ENCODE measurements at regions of chr9 and their contacts with region 1.

Region 1: GRCh38 chr9:34484682-34485081 is 26.1 kb downstream of the DNAI1 start:
- DNase-seq: peak; percentile 54 to 73
- H3K4me3 ChIP-seq: no peak overlapping the region
- H3K27ac ChIP-seq: no peak overlapping the region
- H3K4me1 ChIP-seq: peaks cover 12% of the 10 kb centered on the region
- H3K27me3 ChIP-seq: no peaks in the 10 kb centered on the region
- CTCF ChIP-seq: no peak

Region 2: DNA sequence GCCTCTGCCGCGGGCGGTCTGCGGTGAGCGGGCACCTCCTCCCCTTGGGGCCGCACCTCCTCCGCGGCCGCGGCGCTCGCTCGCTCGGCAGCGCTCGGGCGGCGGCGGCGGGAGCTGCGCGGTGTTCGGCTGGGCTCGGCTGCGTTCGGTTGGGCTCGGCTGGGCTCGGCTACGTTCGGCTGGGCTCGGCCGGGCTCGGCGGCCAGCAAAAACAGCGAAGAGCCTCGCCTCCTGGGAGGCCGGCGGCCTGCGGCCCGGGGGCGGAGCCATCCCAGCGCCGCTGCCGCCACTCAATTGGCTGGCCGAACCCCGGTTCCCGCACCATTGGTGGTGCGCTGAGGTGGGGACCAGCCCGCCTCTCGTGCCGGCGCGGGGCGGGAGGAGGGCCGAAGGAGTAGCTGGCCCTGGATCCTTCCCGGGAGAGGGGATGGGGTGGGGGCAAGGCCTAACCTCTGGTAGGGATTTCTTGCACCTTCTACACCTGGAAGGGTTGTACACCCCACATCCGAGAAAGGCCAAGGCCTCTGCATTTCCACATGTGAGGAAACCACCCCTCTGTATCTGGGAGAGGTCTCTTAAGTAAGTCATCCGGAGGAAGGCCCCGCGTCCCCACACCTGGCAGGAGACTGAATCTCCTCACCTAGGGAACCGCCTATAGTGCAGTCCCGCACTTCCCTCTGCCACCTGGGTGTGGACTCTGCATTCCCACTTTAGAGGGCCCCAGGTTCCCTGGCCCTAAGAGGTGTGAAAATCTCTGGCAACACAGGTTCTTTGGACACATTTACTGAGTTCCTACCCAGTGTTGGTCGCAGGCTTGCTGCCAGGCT is 38.5 kb after region 1 on chr9 and contains the start of gene ENHO:
- CTCF ChIA-PET with region 1: no interaction called
- POLR2A ChIA-PET with region 1: interaction called, 30 read pairs
- intact Hi-C with region 1: no loop called
- DNase-seq: peak; percentile 60 to 89
- H3K4me3 ChIP-seq: peak within 1 kb of the TSS; percentile 35; the same call in 1 of the 2 replicates
- H3K27ac ChIP-seq: no peak within 1 kb of the TSS
- H3K4me1 ChIP-seq: no peaks in the 10 kb centered on the region
- H3K27me3 ChIP-seq: peaks cover 16% of the 10 kb centered on the region; the same call in 1 of the 2 replicates
- CTCF ChIP-seq: no peak
- total RNA-seq, gene ENHO: not detected in 2 replicates

Region 3: GRCh38 chr9:34620061-34620994 is 135.6 kb after region 1 on chr9 and contains the start of gene DCTN3:
- CTCF ChIA-PET with region 1: no interaction called
- POLR2A ChIA-PET with region 1: no interaction called
- intact Hi-C with region 1: no loop called
- DNase-seq: peak; percentile 68 to 82
- H3K4me3 ChIP-seq: peak within 1 kb of the TSS; percentile 89
- H3K27ac ChIP-seq: no peak within 1 kb of the TSS
- H3K4me1 ChIP-seq: no peaks in the 10 kb centered on the region
- H3K27me3 ChIP-seq: peaks cover 8% of the 10 kb centered on the region; the same call in 1 of the 2 replicates
- CTCF ChIP-seq: no peak
- total RNA-seq, gene DCTN3: 47.5 and 57.5 TPM in 2 replicates